ENCODE measurements at regions of chr13 and their contacts with region 1.

Region 1: DNA sequence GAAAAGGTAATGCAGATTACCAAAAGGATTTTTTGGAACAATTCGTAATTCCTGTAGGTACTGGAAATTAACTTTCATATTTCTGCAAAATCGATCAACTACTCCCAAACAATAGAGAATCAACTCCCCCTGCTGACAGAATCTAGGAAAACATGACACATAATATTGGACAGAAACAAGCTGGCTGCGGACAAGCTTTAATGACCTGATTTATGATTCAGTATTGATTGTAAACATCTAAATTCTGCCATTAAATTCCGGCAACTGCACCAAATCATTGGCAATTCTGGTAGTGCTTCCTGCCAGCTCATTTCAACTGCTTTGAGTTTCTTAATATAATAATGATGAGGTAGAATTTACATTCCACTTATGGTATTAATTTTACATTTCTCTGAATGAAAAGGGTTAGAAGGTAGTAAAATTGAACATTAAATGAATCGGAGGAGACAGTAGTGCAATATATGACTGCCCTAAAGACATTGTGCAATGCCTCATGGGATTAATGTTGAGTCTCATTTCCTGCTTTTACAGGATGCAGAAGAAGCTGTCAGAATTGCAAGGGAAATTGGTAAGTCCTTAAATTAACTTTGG is 146.5 kb downstream of the PCCA start:
- DNase-seq: no peak
- H3K4me3 ChIP-seq: no peak overlapping the region
- H3K27ac ChIP-seq: no peak overlapping the region
- H3K4me1 ChIP-seq: peaks cover 30% of the 10 kb centered on the region
- H3K27me3 ChIP-seq: no peaks in the 10 kb centered on the region
- CTCF ChIP-seq: peak; percentile 68

Region 2: GRCh38 chr13:99766641-99767045 is 468.8 kb before region 1 on chr13:
- intact Hi-C with region 1: no loop called
- DNase-seq: no peak
- H3K4me3 ChIP-seq: no peak overlapping the region
- H3K27ac ChIP-seq: no peak overlapping the region
- H3K4me1 ChIP-seq: no peaks in the 10 kb centered on the region
- H3K27me3 ChIP-seq: no peaks in the 10 kb centered on the region
- CTCF ChIP-seq: no peak

Region 3: DNA sequence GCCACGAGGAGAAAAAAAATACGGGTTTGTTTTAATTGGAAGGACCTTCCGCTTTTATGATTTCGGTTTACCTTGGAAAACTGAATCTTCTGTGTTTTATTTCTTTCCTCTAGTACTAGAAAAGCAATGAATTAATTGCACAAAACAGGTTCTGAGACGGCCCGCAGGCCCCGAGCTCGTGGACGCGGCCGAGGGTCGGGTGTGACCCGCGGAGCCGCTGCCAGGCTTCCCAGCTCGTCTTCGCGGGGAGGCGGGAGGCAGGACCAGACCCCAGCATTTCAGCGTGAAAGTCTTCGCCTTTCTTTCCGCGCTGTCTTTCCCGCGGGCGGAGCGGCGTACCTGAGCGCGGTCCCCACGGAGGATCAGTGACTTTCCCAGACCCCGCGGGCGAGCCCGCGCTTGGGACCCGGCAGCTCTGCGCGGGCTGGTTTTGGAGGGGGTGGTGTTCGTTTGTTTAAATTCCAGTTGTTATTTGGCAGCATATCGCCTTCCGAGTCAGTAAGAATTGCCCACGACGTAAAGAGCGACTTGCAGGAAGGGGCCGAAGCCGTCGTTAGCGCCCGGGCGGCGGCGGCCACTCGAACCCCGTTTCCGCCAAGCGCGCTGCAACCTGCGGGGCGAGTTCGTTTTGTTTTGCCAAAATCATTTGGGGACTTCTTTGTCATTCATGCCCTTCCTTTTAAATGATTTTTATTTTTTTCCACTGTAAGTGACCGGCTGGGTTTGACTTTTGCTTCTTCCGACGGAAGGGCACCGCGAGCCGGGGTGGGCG is 340.0 kb before region 1 on chr13:
- intact Hi-C with region 1: loop called (anchors 10 kb)
- DNase-seq: no peak
- H3K4me3 ChIP-seq: peak overlapping the region; percentile 55
- H3K27ac ChIP-seq: no peak overlapping the region
- H3K4me1 ChIP-seq: peaks cover 8% of the 10 kb centered on the region
- H3K27me3 ChIP-seq: peaks cover 75% of the 10 kb centered on the region
- CTCF ChIP-seq: no peak

Region 4: DNA sequence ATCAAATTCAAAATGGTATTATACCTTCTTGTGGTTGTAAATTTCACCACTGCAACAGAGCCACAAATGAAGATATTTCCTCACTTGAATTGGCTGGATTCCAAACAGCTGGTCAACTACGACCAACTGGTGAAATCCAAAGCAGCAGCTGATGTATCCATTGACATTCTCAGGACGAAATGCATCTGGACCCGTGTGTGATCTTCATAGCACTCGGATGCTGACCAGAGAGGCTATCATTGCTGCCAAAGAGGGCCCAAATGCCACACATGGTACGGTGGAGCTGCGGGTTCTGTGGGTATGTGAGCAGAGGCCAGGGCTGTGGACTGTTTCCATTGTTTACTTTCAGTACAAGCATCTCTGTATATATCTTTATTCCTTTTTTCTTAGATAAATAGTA is 172.1 kb before region 1 on chr13:
- intact Hi-C with region 1: no loop called
- DNase-seq: no peak
- H3K4me3 ChIP-seq: no peak overlapping the region
- H3K27ac ChIP-seq: no peak overlapping the region
- H3K4me1 ChIP-seq: no peaks in the 10 kb centered on the region
- H3K27me3 ChIP-seq: peaks cover 8% of the 10 kb centered on the region
- CTCF ChIP-seq: no peak

Measured in left ventricle myocardium inferior (tissue), 1 donor.